ENCODE measurements at regions of chr3 and their contacts with region 1.

Region 1: DNA sequence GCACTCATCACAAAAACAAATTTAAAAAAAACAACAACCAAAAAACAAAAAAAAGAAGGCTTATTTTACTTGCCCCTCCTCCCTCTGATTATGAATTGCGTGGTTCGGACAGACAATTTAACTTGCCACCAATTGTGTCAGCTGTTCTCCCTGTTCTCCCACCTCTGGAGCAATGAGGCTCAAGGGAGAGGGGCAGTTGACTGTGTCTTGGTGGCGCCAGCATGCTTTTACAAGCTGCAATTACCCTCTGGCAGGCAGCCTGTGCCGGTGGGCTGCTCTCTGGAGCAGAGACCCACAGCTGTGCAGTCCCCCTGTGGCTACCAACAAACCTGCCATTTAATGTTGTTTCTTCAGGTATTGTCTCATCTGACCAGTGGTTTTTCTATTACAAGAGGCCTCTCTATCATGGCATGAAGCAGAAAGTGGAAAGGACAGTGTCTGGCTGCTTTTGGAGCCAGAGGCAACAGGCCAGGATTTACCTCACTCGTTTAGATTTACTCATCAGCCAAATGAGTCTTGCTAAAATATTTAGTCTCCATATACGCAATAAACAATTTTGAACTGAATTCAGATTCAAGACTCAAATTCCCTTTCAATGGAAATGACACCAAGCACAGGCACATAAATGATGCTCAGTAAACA is 192.0 kb upstream of the TPRG1 start:
- DNase-seq: no peak
- ATAC-seq: no peak
- H3K4me3 ChIP-seq: no peak overlapping the region
- H3K27ac ChIP-seq: no peak overlapping the region
- H3K4me1 ChIP-seq: no peaks in the 10 kb centered on the region
- H3K27me3 ChIP-seq: peaks cover 20% of the 10 kb centered on the region; the same call in 1 of the 2 replicates
- CTCF ChIP-seq: no peak

Region 2: GRCh38 chr3:188389711-188390342 is 590.0 kb before region 1 on chr3:
- CTCF ChIA-PET with region 1: no interaction called
- POLR2A ChIA-PET with region 1: interaction called, 11 read pairs
- in situ Hi-C with region 1: no loop called
- intact Hi-C with region 1: no loop called
- DNase-seq: no peak
- ATAC-seq: no peak
- H3K4me3 ChIP-seq: no peak overlapping the region
- H3K27ac ChIP-seq: no peak overlapping the region
- H3K4me1 ChIP-seq: no peaks in the 10 kb centered on the region
- H3K27me3 ChIP-seq: no peaks in the 10 kb centered on the region
- CTCF ChIP-seq: no peak

Region 3: GRCh38 chr3:188870431-188870830 is 109.4 kb before region 1 on chr3:
- CTCF ChIA-PET with region 1: no interaction called
- POLR2A ChIA-PET with region 1: no interaction called
- in situ Hi-C with region 1: no loop called
- intact Hi-C with region 1: no loop called
- DNase-seq: no peak
- ATAC-seq: no peak
- H3K4me3 ChIP-seq: no peak overlapping the region
- H3K27ac ChIP-seq: no peak overlapping the region
- H3K4me1 ChIP-seq: no peaks in the 10 kb centered on the region
- H3K27me3 ChIP-seq: no peaks in the 10 kb centered on the region
- CTCF ChIP-seq: no peak

Region 4: GRCh38 chr3:189132231-189132707 is 152.5 kb after region 1 on chr3:
- CTCF ChIA-PET with region 1: no interaction called
- POLR2A ChIA-PET with region 1: no interaction called
- in situ Hi-C with region 1: no loop called
- intact Hi-C with region 1: loop called (anchors 10 kb)
- DNase-seq: no peak
- ATAC-seq: peak; percentile 93
- H3K4me3 ChIP-seq: peak overlapping the region in 1 of 2 experiments; percentile 28; a peak in 2 of 4 replicates
- H3K27ac ChIP-seq: no peak overlapping the region
- H3K4me1 ChIP-seq: peaks cover 8% of the 10 kb centered on the region; the same call in 1 of the 2 replicates
- H3K27me3 ChIP-seq: no peaks in the 10 kb centered on the region
- CTCF ChIP-seq: no peak

Measured in Panc1 (cell line).